ENCODE measurements at regions of chr13 and their contacts with region 1.

Region 1: GRCh38 chr13:41356786-41357185 is 45.7 kb downstream of the NAA16 start:
- DNase-seq: peak; percentile 16 to 69 (median 30)
- ATAC-seq: peak; percentile 77 to 82
- H3K4me3 Mint-ChIP-seq: peak overlapping the region; percentile 60 to 87 (median 78)
- H3K27ac Mint-ChIP-seq: peak overlapping the region; percentile 90 to 97 (median 94)
- H3K4me1 Mint-ChIP-seq: peaks cover 32 to 77% (median 72%) of the 10 kb centered on the region in 4 donors
- H3K27me3 Mint-ChIP-seq: no peaks in the 10 kb centered on the region

Region 2: GRCh38 chr13:41332829-41333228 is 24.0 kb before region 1 on chr13:
- POLR2A ChIA-PET with region 1: interaction called, 11 read pairs
- DNase-seq: no peak
- ATAC-seq: no peak
- H3K4me3 Mint-ChIP-seq: no peak overlapping the region
- H3K27ac Mint-ChIP-seq: peak overlapping the region in 7 of 10 donors; percentile 31 to 85 (median 56)
- H3K4me1 Mint-ChIP-seq: peaks cover 23 to 66% (median 59%) of the 10 kb centered on the region in 4 donors
- H3K27me3 Mint-ChIP-seq: no peaks in the 10 kb centered on the region

Measured in naive thymus-derived CD8-positive, alpha-beta T cell (primary cell).